CD4-positive, alpha-beta memory T cell (primary cell): ENCODE measurements at regions of chr2 and their contacts with region 1.

Region 1: GRCh38 chr2:39124000-39124745 is 3.3 kb upstream of the SOS1 start:
- DNase-seq: peak; percentile 92 to 97 (median 94)
- H3K4me3 ChIP-seq: peak overlapping the region; percentile 82 to 99
- H3K4me3 Mint-ChIP-seq: peak overlapping the region; percentile 88 to 96 (median 94)
- H3K27ac ChIP-seq: peak overlapping the region; percentile 92
- H3K27ac Mint-ChIP-seq: peak overlapping the region; percentile 91 to 96 (median 94)
- H3K4me1 ChIP-seq: peaks cover 59% of the 10 kb centered on the region
- H3K4me1 Mint-ChIP-seq: peaks cover 29 to 75% (median 53%) of the 10 kb centered on the region in 4 donors
- H3K27me3 ChIP-seq: no peaks in the 10 kb centered on the region
- H3K27me3 Mint-ChIP-seq: no peaks in the 10 kb centered on the region

Region 2: GRCh38 chr2:38377050-38377828 is 746.9 kb before region 1 on chr2 and contains the start of gene ATL2:
- CTCF ChIA-PET with region 1: no interaction called
- POLR2A ChIA-PET with region 1: no interaction called
- intact Hi-C with region 1: loop called (anchors 1 kb)
- DNase-seq: peak; percentile 91 to 97 (median 94)
- H3K4me3 ChIP-seq: peak within 1 kb of the TSS; percentile 67 to 85
- H3K4me3 Mint-ChIP-seq: peak within 1 kb of the TSS; percentile 93 to 100 (median 96)
- H3K27ac ChIP-seq: peak within 1 kb of the TSS; percentile 89
- H3K27ac Mint-ChIP-seq: peak within 1 kb of the TSS; percentile 90 to 98 (median 97)
- H3K4me1 ChIP-seq: peaks cover 63% of the 10 kb centered on the region
- H3K4me1 Mint-ChIP-seq: peaks cover 45 to 81% (median 65%) of the 10 kb centered on the region in 4 donors
- H3K27me3 ChIP-seq: no peaks in the 10 kb centered on the region
- H3K27me3 Mint-ChIP-seq: no peaks in the 10 kb centered on the region
- total RNA-seq, gene ATL2: 51.5 to 64.3 TPM

Region 3: DNA sequence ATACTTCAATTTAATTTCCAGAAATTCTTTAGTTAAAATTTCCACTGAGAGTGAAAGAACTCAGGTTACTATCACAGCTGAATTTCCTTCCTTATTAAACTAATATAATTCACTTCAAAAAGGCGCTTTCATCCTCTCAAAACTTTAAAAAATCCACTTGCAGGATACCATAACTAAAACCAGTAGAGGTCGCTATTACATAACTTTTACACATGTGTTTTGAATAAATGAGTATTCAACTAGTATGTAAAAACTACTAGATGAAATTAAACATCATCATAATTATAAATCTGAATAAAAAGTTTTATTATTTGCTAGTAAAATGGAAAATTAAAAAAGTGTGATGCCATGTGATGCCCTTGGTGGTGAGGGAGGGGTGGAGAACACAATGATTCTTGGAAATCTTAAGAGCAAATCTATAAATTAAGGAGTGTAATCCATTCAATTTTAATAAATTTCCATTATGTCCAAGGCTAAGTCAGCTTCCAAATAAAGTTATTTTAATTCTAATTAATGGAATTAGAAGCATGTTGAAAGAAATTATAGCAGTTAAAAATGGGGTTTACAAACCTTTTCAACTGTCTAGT is 64.7 kb before region 1 on chr2:
- CTCF ChIA-PET with region 1: interaction called, 23 read pairs
- POLR2A ChIA-PET with region 1: interaction called, 14 read pairs
- intact Hi-C with region 1: loop called (anchors 1 kb)
- DNase-seq: peak in 4 of 5 donors; percentile 61 to 65 (median 62)
- H3K4me3 ChIP-seq: no peak overlapping the region
- H3K4me3 Mint-ChIP-seq: no peak overlapping the region
- H3K27ac ChIP-seq: no peak overlapping the region
- H3K27ac Mint-ChIP-seq: peak overlapping the region in 3 of 7 donors; percentile 0 to 68 (median 35)
- H3K4me1 ChIP-seq: no peaks in the 10 kb centered on the region
- H3K4me1 Mint-ChIP-seq: peaks cover 1 to 11% (median 4%) of the 10 kb centered on the region in 4 donors
- H3K27me3 ChIP-seq: no peaks in the 10 kb centered on the region
- H3K27me3 Mint-ChIP-seq: no peaks in the 10 kb centered on the region

Region 4: DNA sequence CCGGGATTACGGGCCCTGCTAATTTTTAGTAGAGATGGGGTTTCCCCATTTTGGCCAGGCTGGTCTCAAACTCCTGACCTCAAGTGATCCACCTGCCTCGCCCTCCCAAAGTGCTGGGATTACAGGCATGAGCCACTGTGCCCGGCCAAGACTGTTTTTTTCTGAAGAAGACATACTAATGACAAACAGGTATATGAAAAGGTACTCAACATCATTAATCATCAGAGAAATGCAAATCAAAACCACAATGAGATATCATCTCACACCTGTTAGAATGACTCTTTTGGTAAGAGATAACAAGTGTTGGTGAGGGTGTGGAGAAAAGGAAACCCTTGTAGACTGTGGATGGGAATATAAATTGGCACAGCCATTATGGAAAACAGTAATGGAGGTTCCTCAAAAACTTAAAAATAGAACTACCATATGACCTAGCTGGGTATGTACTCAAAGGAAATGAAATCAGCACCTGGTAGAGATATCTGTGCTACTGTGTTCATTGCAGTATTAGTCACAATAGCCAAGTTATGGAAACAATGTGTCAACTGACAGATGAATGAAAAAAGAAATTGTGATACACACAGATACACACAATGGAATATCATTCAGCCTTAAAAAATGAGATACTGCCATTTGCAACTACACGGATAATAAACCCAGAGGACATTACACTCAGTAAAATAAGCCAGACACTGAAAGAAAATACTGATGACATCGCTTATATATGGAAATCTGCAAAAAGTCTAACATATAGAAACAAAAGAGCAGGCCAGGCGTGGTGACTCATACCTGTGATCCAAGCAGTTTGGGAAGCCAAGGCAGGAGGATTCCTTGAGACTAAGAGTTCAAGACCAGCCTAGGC is 24.1 kb before region 1 on chr2:
- CTCF ChIA-PET with region 1: interaction called, 3 read pairs
- POLR2A ChIA-PET with region 1: interaction called, 12 read pairs
- intact Hi-C with region 1: loop called (anchors 2 kb)
- DNase-seq: peak in 4 of 5 donors; percentile 15 to 46 (median 22)
- H3K4me3 ChIP-seq: no peak overlapping the region
- H3K4me3 Mint-ChIP-seq: peak overlapping the region in 7 of 8 donors; percentile 26 to 67 (median 54)
- H3K27ac ChIP-seq: no peak overlapping the region
- H3K27ac Mint-ChIP-seq: peak overlapping the region; percentile 15 to 84 (median 63)
- H3K4me1 ChIP-seq: peaks cover 77% of the 10 kb centered on the region
- H3K4me1 Mint-ChIP-seq: peaks cover 50 to 82% (median 66%) of the 10 kb centered on the region in 4 donors
- H3K27me3 ChIP-seq: no peaks in the 10 kb centered on the region
- H3K27me3 Mint-ChIP-seq: no peaks in the 10 kb centered on the region

Region 5: GRCh38 chr2:39135690-39136259 is 11.6 kb after region 1 on chr2:
- CTCF ChIA-PET with region 1: interaction called, 12 read pairs
- POLR2A ChIA-PET with region 1: interaction called, 74 read pairs
- intact Hi-C with region 1: no loop called
- DNase-seq: no peak
- H3K4me3 ChIP-seq: no peak overlapping the region
- H3K4me3 Mint-ChIP-seq: peak overlapping the region; percentile 57 to 85 (median 72)
- H3K27ac ChIP-seq: peak overlapping the region; percentile 25
- H3K27ac Mint-ChIP-seq: peak overlapping the region; percentile 73 to 96 (median 88)
- H3K4me1 ChIP-seq: peaks cover 65% of the 10 kb centered on the region
- H3K4me1 Mint-ChIP-seq: peaks cover 35 to 74% (median 54%) of the 10 kb centered on the region in 4 donors
- H3K27me3 ChIP-seq: no peaks in the 10 kb centered on the region
- H3K27me3 Mint-ChIP-seq: no peaks in the 10 kb centered on the region

Region 6: DNA sequence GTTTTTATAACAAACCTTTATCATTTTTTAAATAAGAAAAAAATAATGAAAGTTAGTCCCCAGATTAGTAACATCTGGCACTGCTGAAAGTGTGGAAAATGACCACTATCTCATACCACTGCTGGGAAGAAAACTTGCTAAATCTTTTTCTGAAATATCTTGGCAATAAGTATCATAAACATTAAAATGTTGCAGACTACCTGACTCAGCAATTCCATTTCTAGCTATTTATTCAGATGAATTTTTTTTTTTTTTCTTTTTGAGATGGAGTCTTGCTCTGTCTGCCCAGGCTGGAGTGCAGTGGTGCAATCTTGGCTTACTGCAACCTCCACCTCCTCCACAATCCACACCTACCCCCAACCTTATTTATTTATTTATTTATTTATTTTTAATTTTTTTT is 31.9 kb after region 1 on chr2:
- CTCF ChIA-PET with region 1: interaction called, 3 read pairs
- POLR2A ChIA-PET with region 1: interaction called, 10 read pairs
- intact Hi-C with region 1: no loop called
- DNase-seq: no peak
- H3K4me3 ChIP-seq: no peak overlapping the region
- H3K4me3 Mint-ChIP-seq: no peak overlapping the region
- H3K27ac ChIP-seq: no peak overlapping the region
- H3K27ac Mint-ChIP-seq: no peak overlapping the region
- H3K4me1 ChIP-seq: no peaks in the 10 kb centered on the region
- H3K4me1 Mint-ChIP-seq: no peaks in the 10 kb centered on the region
- H3K27me3 ChIP-seq: no peaks in the 10 kb centered on the region
- H3K27me3 Mint-ChIP-seq: no peaks in the 10 kb centered on the region

Region 7: GRCh38 chr2:39227628-39228412 is 103.6 kb after region 1 on chr2:
- CTCF ChIA-PET with region 1: interaction called, 271 read pairs
- POLR2A ChIA-PET with region 1: interaction called, 225 read pairs
- intact Hi-C with region 1: loop called (anchors 1 kb)
- DNase-seq: peak; percentile 72 to 79 (median 78)
- H3K4me3 ChIP-seq: no peak overlapping the region
- H3K4me3 Mint-ChIP-seq: peak overlapping the region; percentile 38 to 92 (median 76)
- H3K27ac ChIP-seq: no peak overlapping the region
- H3K27ac Mint-ChIP-seq: peak overlapping the region; percentile 5 to 88 (median 81)
- H3K4me1 ChIP-seq: peaks cover 15% of the 10 kb centered on the region
- H3K4me1 Mint-ChIP-seq: peaks cover 12 to 27% (median 20%) of the 10 kb centered on the region in 4 donors
- H3K27me3 ChIP-seq: no peaks in the 10 kb centered on the region
- H3K27me3 Mint-ChIP-seq: peaks cover 0 to 1% of the 10 kb centered on the region in 2 donors

Region 8: GRCh38 chr2:39583213-39583612 is 459.0 kb after region 1 on chr2:
- CTCF ChIA-PET with region 1: no interaction called
- POLR2A ChIA-PET with region 1: no interaction called
- intact Hi-C with region 1: no loop called
- DNase-seq: no peak
- H3K4me3 ChIP-seq: no peak overlapping the region
- H3K4me3 Mint-ChIP-seq: no peak overlapping the region
- H3K27ac ChIP-seq: no peak overlapping the region
- H3K27ac Mint-ChIP-seq: no peak overlapping the region
- H3K4me1 ChIP-seq: no peaks in the 10 kb centered on the region
- H3K4me1 Mint-ChIP-seq: no peaks in the 10 kb centered on the region
- H3K27me3 ChIP-seq: no peaks in the 10 kb centered on the region
- H3K27me3 Mint-ChIP-seq: peaks cover 5 to 8% of the 10 kb centered on the region in 2 donors